ENCODE measurements at regions of chr12 and their contacts with region 1.

Region 1: DNA sequence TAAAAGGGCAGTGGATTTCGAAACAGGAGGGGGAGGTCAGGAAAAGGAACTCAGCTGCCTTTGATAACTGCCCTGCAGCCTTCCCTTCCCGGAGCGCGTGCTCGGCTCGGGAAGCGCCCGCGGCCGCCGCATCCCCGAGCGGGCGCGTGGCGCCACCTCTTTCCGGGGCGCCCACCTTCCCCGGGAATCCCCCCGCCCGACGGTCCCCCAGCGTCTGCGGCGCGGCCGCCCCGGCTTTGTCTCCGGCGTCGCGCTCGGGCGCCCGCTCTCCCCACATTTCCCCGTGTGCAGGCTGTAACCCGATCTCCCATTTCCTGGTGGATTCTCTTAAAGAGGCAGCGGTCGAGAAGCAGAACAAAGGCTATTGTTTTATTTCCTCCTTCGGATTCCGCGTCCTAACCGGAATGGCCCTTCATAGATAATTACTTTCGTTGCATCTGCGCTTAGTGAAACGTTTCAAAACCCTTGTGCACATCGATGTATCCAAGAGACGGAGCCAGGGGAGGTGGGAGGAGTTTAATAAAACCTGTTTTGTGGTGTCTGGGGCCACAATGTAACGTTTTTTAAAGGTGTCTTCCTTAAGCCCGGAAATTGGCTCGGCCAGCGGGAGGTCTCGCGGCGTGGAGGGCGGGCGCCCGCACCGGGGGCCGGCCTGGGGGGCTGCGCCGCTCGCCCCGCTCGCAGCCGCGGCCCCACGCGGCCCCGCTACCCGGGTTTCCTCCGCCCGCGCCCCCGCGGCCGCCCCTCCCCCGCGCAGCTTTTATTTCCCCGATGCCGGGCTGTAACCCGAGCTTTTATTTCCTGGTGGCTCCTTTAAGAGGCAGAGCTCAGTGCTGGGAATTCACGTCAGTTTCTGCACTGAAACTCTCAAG is at the start of gene ETV6:
- DNase-seq: peak; percentile 95
- H3K4me3 ChIP-seq: peak within 1 kb of the TSS; percentile 71 to 88 (median 84)
- H3K27ac ChIP-seq: peak within 1 kb of the TSS; percentile 90 to 98 (median 98)
- H3K4me1 ChIP-seq: peaks cover 16 to 26% (median 18%) of the 10 kb centered on the region in 4 donors
- H3K27me3 ChIP-seq: no peaks in the 10 kb centered on the region
- CTCF ChIP-seq: no peak
- EP300 ChIP-seq: peak; percentile 74
- POLR2A ChIP-seq: peak; percentile 3
- total RNA-seq, gene ETV6: 22.4 to 29.6 (median 25.3) TPM

Region 2: GRCh38 chr12:11719678-11720099 is 70.6 kb after region 1 on chr12:
- intact Hi-C with region 1: loop called (anchors 10 kb)
- DNase-seq: no peak
- H3K4me3 ChIP-seq: no peak overlapping the region
- H3K27ac ChIP-seq: peak overlapping the region; percentile 48 to 69 (median 58)
- H3K4me1 ChIP-seq: peaks cover 43 to 83% (median 70%) of the 10 kb centered on the region in 4 donors
- H3K27me3 ChIP-seq: no peaks in the 10 kb centered on the region
- CTCF ChIP-seq: no peak
- EP300 ChIP-seq: no peak
- POLR2A ChIP-seq: no peak

Region 3: GRCh38 chr12:11798856-11799501 is 149.9 kb after region 1 on chr12:
- intact Hi-C with region 1: loop called (anchors 10 kb)
- DNase-seq: no peak
- H3K4me3 ChIP-seq: no peak overlapping the region
- H3K27ac ChIP-seq: peak overlapping the region; percentile 88 to 94 (median 92)
- H3K4me1 ChIP-seq: peaks cover 47 to 70% (median 66%) of the 10 kb centered on the region in 4 donors
- H3K27me3 ChIP-seq: no peaks in the 10 kb centered on the region
- CTCF ChIP-seq: no peak
- EP300 ChIP-seq: no peak
- POLR2A ChIP-seq: no peak

Region 4: DNA sequence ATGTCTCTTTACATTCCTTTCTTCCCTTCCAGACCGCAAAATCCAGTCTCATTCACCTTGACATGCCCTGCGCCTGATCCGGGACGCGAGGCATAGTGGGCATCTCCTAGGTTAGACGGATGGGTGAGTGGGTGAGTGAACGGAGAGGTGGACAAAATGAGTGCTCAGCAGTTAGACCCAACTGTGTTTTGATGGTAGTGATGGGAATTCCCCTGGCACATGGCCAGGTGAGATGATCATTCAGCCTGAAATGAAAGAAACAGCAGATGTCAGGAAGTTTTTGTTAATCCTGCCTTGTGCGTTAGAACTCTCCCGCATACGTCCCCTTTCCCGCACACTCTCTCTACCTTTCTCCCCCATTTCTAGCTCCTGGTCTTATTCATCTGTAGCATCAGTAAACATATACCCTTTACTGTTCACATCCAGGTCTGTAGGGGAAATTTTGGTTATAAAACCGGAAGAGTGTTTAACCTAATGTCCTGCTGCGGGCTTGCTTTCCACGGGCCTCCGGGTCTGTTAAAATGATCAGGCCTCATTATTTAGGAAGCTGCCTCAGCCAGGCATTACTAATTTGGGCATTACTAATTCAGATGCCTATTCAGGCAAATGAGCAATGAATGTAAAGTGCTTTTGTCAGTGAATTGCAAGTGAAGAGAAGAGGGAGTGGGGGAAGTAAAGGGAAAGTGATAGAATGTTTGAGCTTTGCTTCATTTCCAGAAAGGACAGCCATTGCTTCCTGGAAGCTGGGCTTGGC is 173.2 kb after region 1 on chr12:
- intact Hi-C with region 1: no loop called
- DNase-seq: no peak
- H3K4me3 ChIP-seq: no peak overlapping the region
- H3K27ac ChIP-seq: peak overlapping the region; percentile 53 to 73 (median 71)
- H3K4me1 ChIP-seq: peaks cover 14 to 78% (median 64%) of the 10 kb centered on the region in 4 donors
- H3K27me3 ChIP-seq: no peaks in the 10 kb centered on the region
- CTCF ChIP-seq: no peak
- EP300 ChIP-seq: peak; percentile 30
- POLR2A ChIP-seq: no peak

Region 5: GRCh38 chr12:11891754-11892386 is 242.8 kb after region 1 on chr12:
- intact Hi-C with region 1: loop called (anchors 5 kb)
- DNase-seq: no peak
- H3K4me3 ChIP-seq: no peak overlapping the region
- H3K27ac ChIP-seq: peak overlapping the region; percentile 5 to 45 (median 29)
- H3K4me1 ChIP-seq: peaks cover 7 to 18% (median 10%) of the 10 kb centered on the region in 4 donors
- H3K27me3 ChIP-seq: no peaks in the 10 kb centered on the region
- CTCF ChIP-seq: peak in 2 of 3 experiments; percentile 31 to 42
- EP300 ChIP-seq: no peak
- POLR2A ChIP-seq: no peak

Measured in esophagus muscularis mucosa (tissue), 4 donors.